RWPE1 (cell line): ENCODE measurements at regions of chr7 and their contacts with region 1.

Region 1: GRCh38 chr7:146290746-146291145 is 174.1 kb downstream of the CNTNAP2 start:
- DNase-seq: no peak
- H3K27ac ChIP-seq: no peak overlapping the region
- CTCF ChIP-seq: no peak

Region 2: GRCh38 chr7:146991596-146991995 is 700.9 kb after region 1 on chr7:
- CTCF ChIA-PET with region 1: interaction called, 10 read pairs
- POLR2A ChIA-PET with region 1: no interaction called
- DNase-seq: no peak
- H3K27ac ChIP-seq: no peak overlapping the region
- CTCF ChIP-seq: no peak

Region 3: DNA sequence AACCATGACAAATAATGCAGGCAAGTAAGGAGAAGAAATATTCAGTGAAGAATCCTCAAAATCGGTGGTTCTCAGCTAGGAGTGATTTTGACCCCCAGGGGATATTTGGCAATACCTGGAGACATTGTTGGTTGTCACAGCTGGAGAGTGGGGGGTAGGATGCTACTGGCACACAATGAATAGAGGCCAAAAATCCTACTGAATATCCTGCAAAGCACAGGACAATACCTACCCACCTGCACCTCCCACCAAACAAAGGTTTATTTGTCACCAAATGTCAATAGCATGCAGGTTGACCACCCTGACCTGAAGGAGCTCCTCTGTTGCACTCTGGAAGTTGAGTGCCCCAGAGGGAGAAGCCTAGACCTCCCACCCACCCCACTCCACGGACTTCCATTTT is 854.4 kb after region 1 on chr7:
- CTCF ChIA-PET with region 1: no interaction called
- POLR2A ChIA-PET with region 1: no interaction called
- DNase-seq: no peak
- H3K27ac ChIP-seq: no peak overlapping the region
- CTCF ChIP-seq: no peak